BJ (cell line): ENCODE measurements at regions of chr1 and their contacts with region 1.

Region 1: GRCh38 chr1:62746085-62746808 is 37.7 kb upstream of the ATG4C start:
- DNase-seq: no peak
- H3K4me3 ChIP-seq: peak overlapping the region; percentile 19; the same call in 1 of the 2 replicates
- H3K27me3 ChIP-seq: no peaks in the 10 kb centered on the region
- CTCF ChIP-seq: peak; percentile 46

Region 2: GRCh38 chr1:62508187-62508758 is 238.0 kb before region 1 on chr1:
- CTCF ChIA-PET with region 1: interaction called, 53 read pairs
- POLR2A ChIA-PET with region 1: no interaction called
- DNase-seq: peak; percentile 16
- H3K4me3 ChIP-seq: no peak overlapping the region
- H3K27me3 ChIP-seq: no peaks in the 10 kb centered on the region
- CTCF ChIP-seq: peak; percentile 66

Region 3: GRCh38 chr1:62530516-62531154 is 215.6 kb before region 1 on chr1:
- CTCF ChIA-PET with region 1: interaction called, 75 read pairs
- POLR2A ChIA-PET with region 1: no interaction called
- DNase-seq: no peak
- H3K4me3 ChIP-seq: no peak overlapping the region
- H3K27me3 ChIP-seq: no peaks in the 10 kb centered on the region
- CTCF ChIP-seq: peak; percentile 80

Region 4: DNA sequence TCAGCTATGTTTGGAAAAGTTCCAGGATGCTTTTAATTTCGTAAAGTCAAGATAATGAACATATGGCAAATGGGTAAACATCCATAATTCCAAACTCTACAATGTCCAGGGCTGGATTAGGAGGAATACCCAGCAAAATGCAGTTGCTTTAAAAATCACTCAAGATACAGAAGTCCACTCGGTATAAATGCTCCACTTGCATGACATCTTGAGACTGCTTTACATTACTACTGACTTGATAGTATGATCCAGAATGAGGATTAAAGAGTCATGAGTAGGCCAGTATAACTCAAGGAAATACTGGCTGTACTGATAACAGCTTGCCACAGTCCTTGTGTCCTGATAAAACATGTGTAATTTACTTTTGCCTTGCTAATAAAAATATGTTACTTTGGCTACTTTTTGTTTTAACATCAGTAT is 207.2 kb before region 1 on chr1:
- CTCF ChIA-PET with region 1: interaction called, 15 read pairs
- POLR2A ChIA-PET with region 1: no interaction called
- DNase-seq: no peak
- H3K4me3 ChIP-seq: no peak overlapping the region
- H3K27me3 ChIP-seq: no peaks in the 10 kb centered on the region
- CTCF ChIP-seq: no peak

Region 5: GRCh38 chr1:62573675-62574074 is 172.6 kb before region 1 on chr1:
- CTCF ChIA-PET with region 1: no interaction called
- POLR2A ChIA-PET with region 1: no interaction called
- DNase-seq: no peak
- H3K4me3 ChIP-seq: no peak overlapping the region
- H3K27me3 ChIP-seq: no peaks in the 10 kb centered on the region
- CTCF ChIP-seq: no peak

Region 6: GRCh38 chr1:62735491-62736171 is 10.6 kb before region 1 on chr1:
- CTCF ChIA-PET with region 1: interaction called, 18 read pairs
- POLR2A ChIA-PET with region 1: no interaction called
- DNase-seq: peak; percentile 60
- H3K4me3 ChIP-seq: no peak overlapping the region
- H3K27me3 ChIP-seq: no peaks in the 10 kb centered on the region
- CTCF ChIP-seq: no peak

Region 7: GRCh38 chr1:64423526-64423925 is 1677.3 kb after region 1 on chr1:
- CTCF ChIA-PET with region 1: no interaction called
- POLR2A ChIA-PET with region 1: no interaction called
- DNase-seq: no peak
- H3K4me3 ChIP-seq: no peak overlapping the region
- H3K27me3 ChIP-seq: peaks cover 2% of the 10 kb centered on the region; the same call in 1 of the 2 replicates
- CTCF ChIP-seq: no peak